CD4-positive, alpha-beta T cell (primary cell): ENCODE measurements at regions of chr5 and their contacts with region 1.

Region 1: GRCh38 chr5:128083033-128083810 is at the start of gene SLC12A2:
- DNase-seq: peak; percentile 80 to 99 (median 88)
- ATAC-seq: peak; percentile 72
- H3K4me3 ChIP-seq: peak within 1 kb of the TSS; percentile 81
- H3K4me3 Mint-ChIP-seq: peak within 1 kb of the TSS; percentile 97
- H3K27ac ChIP-seq: peak within 1 kb of the TSS; percentile 89 to 90
- H3K27ac Mint-ChIP-seq: peak within 1 kb of the TSS; percentile 92
- H3K4me1 ChIP-seq: peaks cover 27% of the 10 kb centered on the region
- H3K4me1 Mint-ChIP-seq: peaks cover 79% of the 10 kb centered on the region
- H3K27me3 ChIP-seq: no peaks in the 10 kb centered on the region
- H3K27me3 Mint-ChIP-seq: no peaks in the 10 kb centered on the region
- CTCF ChIP-seq: no peak
- total RNA-seq, gene SLC12A2: 13.7 to 16.4 TPM

Region 2: GRCh38 chr5:127517480-127518318 is 565.5 kb before region 1 on chr5 and contains the start of gene PRRC1:
- CTCF ChIA-PET with region 1: no interaction called
- POLR2A ChIA-PET with region 1: interaction called, 3 read pairs
- intact Hi-C with region 1: loop called (anchors 5 to 10 kb)
- DNase-seq: peak; percentile 64 to 92 (median 76)
- ATAC-seq: peak; percentile 94
- H3K4me3 ChIP-seq: peak within 1 kb of the TSS; percentile 97
- H3K4me3 Mint-ChIP-seq: peak within 1 kb of the TSS; percentile 97
- H3K27ac ChIP-seq: peak within 1 kb of the TSS; percentile 68 to 76
- H3K27ac Mint-ChIP-seq: peak within 1 kb of the TSS; percentile 82
- H3K4me1 ChIP-seq: peaks cover 15% of the 10 kb centered on the region
- H3K4me1 Mint-ChIP-seq: peaks cover 44% of the 10 kb centered on the region
- H3K27me3 ChIP-seq: no peaks in the 10 kb centered on the region
- H3K27me3 Mint-ChIP-seq: peaks cover 6% of the 10 kb centered on the region
- CTCF ChIP-seq: no peak
- total RNA-seq, gene PRRC1: 32.0 to 33.8 TPM

Region 3: GRCh38 chr5:127959152-127959764 is 124.0 kb before region 1 on chr5:
- CTCF ChIA-PET with region 1: no interaction called
- POLR2A ChIA-PET with region 1: no interaction called
- intact Hi-C with region 1: loop called in 1 of 2 experiments (anchors 5 kb)
- DNase-seq: peak in 5 of 14 experiments; percentile 3 to 32 (median 12)
- ATAC-seq: no peak
- H3K4me3 ChIP-seq: no peak overlapping the region
- H3K4me3 Mint-ChIP-seq: no peak overlapping the region
- H3K27ac ChIP-seq: no peak overlapping the region
- H3K27ac Mint-ChIP-seq: no peak overlapping the region
- H3K4me1 ChIP-seq: no peaks in the 10 kb centered on the region
- H3K4me1 Mint-ChIP-seq: peaks cover 31% of the 10 kb centered on the region
- H3K27me3 ChIP-seq: no peaks in the 10 kb centered on the region
- H3K27me3 Mint-ChIP-seq: no peaks in the 10 kb centered on the region
- CTCF ChIP-seq: no peak

Region 4: DNA sequence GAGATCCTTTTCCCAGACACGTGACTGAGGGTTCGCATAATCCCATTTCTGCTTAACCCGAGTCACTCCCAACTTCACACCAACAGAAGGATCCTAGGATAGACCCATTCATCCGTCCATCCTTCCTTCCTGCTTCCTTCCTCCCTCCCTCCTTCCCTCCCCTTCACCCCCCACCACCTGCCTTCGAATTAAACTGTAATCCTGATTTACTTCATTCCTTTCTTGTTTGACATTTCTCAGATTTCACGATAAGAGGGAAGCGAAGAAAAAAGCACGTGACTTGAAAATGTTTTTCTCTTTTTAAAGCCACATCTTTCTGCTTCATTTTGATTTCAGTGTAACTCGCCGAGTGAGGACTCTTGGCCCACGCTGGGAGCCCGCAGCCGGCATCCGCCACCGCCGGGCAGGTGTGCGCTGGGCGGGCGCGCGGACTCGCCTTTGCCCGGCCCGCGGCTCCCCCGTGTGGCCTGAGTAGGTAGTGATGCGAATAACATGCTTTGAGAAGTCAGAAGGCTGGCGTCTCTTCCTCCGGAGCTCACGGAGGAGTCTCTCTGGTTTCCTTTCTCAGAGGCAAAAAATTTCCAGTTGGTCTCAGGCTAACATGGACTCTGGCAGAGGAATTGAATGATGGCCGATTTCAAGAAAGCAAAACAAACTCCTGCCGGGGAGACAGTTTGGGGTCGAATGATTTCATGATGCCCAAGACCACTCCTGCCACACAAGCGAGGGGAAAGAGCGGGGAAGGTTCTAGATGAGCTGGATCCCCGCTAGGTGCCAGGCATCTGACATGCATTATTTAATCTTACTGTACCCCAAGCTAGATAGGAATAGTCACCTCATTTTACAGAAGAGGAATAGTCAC is 118.1 kb after region 1 on chr5:
- CTCF ChIA-PET with region 1: no interaction called
- POLR2A ChIA-PET with region 1: interaction called, 8 read pairs
- intact Hi-C with region 1: loop called in 1 of 2 experiments (anchors 5 kb)
- DNase-seq: peak; percentile 71 to 88 (median 82)
- ATAC-seq: peak; percentile 66
- H3K4me3 ChIP-seq: no peak overlapping the region
- H3K4me3 Mint-ChIP-seq: no peak overlapping the region
- H3K27ac ChIP-seq: no peak overlapping the region
- H3K27ac Mint-ChIP-seq: no peak overlapping the region
- H3K4me1 ChIP-seq: peaks cover 29% of the 10 kb centered on the region
- H3K4me1 Mint-ChIP-seq: peaks cover 47% of the 10 kb centered on the region
- H3K27me3 ChIP-seq: no peaks in the 10 kb centered on the region
- H3K27me3 Mint-ChIP-seq: no peaks in the 10 kb centered on the region
- CTCF ChIP-seq: peak; percentile 89